Mucosa of descending colon (tissue), 3 donors: ENCODE measurements at regions of chr14 and their contacts with region 1.

Region 1: DNA sequence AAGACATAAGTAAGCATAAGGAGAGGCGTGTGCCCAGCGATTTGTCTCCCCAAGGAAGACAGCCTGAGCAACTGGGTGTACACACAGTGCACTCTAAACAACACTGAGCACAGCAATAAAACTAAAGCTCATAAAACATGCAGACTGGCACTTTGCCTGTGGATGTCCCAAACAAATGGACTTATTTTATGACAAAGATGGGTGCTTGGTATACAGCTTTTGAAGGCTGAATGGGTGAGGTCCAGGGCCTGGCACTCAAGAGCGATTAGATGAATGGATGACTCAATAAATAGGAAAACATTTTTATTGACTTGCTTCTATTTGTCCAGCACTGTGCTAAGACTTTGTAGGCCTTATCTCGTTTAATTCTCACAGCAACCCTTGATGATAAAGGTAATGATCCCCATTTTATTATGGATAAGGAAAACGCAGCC is 28.5 kb downstream of the LGMN start:
- DNase-seq: peak in 2 of 3 donors; percentile 54 to 94
- ATAC-seq: peak; percentile 94
- H3K4me3 ChIP-seq: no peak overlapping the region
- H3K4me1 ChIP-seq: peaks cover 18% of the 10 kb centered on the region
- CTCF ChIP-seq: no peak

Region 2: DNA sequence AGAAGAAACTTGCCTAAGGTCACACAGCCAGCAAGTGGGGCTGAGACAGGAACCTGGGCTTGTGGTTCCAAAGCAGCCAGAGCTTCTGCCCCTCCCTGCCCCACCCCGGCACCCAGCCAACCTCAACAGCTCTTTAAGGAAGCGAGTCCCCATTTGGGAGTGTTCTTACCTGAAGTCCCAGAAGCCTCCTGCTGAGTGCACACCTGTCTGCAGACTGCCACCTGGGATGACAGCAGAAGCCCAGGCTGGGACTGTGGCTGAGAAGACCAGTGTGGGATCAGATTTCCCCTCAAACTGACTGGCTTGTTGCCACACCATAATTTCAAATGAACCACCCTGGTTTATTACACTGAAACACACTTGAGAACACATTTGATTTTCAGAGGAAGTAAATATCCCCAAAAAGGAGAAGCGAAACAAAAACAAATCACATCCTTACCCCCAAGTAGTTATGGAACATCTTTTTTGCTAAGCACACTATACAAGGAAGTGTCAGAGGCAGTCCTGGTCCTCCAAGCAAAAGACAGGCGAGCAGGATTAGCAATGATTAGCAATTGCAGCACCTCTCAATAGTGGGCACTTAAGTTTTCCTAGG is 212.6 kb before region 1 on chr14:
- intact Hi-C with region 1: no loop called
- DNase-seq: peak; percentile 89 to 93 (median 90)
- ATAC-seq: peak; percentile 88
- H3K4me3 ChIP-seq: no peak overlapping the region
- H3K4me1 ChIP-seq: peaks cover 11% of the 10 kb centered on the region
- CTCF ChIP-seq: no peak

Region 3: GRCh38 chr14:92783816-92784431 is 64.0 kb after region 1 on chr14:
- intact Hi-C with region 1: loop called in 1 of 2 experiments (anchors 10 kb)
- DNase-seq: peak in 1 of 3 donors; percentile 86
- ATAC-seq: peak; percentile 81
- H3K4me3 ChIP-seq: no peak overlapping the region
- H3K4me1 ChIP-seq: peaks cover 5% of the 10 kb centered on the region
- CTCF ChIP-seq: peak; percentile 38

Region 4: DNA sequence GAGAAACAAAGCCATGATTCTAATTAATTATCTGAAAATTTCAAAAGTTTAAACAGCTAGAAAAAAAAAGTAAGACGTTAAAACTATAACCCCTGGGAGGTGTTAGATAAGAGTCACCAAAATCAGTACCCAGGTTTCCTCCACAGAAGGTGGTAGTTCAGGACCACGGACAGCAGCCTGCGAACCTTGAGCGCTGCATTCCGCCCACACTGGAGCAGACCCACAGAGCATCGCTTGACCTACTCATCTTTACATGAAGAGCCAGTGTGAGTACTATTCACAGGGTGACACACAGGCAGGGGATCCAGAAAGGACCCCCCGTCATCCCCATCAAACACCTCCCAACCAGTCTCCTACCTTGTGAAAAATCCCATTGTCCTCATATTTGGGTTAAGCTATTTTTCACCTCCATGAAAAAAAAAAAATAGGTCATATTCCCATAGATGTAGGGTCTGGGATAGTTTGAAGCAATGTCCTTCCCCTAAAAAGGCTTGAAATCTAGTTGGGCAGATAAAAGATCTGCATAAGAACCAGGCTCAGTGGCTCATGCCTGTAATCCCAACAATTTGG is 194.3 kb after region 1 on chr14:
- intact Hi-C with region 1: no loop called
- DNase-seq: peak in 1 of 3 donors; percentile 61
- ATAC-seq: no peak
- H3K4me3 ChIP-seq: no peak overlapping the region
- H3K4me1 ChIP-seq: no peaks in the 10 kb centered on the region
- CTCF ChIP-seq: no peak